ENCODE measurements at regions of chr14 and their contacts with region 1.

Region 1: DNA sequence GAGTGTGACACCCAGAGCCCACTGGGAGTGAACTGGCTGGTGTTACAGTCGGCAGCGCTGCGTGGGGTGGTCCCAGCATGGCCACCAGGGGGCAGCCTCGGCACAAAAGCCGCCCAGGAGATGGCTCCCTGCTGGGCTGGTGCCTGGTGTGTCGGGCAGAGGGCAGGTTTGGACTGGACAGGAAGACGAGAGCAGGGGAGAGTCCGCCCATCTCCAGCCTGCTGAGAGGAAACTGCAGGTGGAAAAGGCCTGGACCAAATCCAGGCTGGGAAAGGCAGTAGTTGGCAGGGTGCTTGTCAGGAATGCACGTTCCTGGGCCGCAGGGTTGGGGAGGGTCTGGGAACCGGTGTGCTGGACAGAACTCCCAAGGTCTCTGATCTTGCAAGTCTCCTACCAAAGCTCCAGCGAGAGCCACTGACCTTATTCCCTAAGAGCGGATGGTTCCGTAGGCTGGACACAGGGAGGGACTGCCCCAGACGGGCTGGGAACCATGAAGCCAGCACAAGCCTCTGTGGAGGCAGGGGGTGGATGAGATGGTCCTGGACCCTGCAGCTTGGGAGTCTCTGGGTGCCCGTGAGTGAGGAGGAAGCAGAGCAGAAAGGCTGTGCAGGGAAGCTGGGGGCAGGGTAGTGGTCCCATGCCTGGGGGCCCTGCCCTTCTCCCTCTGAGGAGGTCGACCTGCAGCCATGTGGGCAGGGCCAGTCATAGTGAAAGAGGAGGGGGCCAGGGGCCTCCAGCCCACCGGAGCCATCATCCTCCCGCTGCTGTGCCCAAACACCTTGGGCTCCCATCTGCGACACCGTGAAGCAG is 1.8 kb downstream of the AHNAK2 start:
- DNase-seq: peak; percentile 93
- H3K4me3 Mint-ChIP-seq: peak overlapping the region; percentile 97
- H3K27ac Mint-ChIP-seq: no peak overlapping the region
- H3K4me1 Mint-ChIP-seq: peaks cover 41% of the 10 kb centered on the region
- H3K27me3 Mint-ChIP-seq: no peaks in the 10 kb centered on the region
- CTCF ChIP-seq: peak; percentile 98

Region 2: DNA sequence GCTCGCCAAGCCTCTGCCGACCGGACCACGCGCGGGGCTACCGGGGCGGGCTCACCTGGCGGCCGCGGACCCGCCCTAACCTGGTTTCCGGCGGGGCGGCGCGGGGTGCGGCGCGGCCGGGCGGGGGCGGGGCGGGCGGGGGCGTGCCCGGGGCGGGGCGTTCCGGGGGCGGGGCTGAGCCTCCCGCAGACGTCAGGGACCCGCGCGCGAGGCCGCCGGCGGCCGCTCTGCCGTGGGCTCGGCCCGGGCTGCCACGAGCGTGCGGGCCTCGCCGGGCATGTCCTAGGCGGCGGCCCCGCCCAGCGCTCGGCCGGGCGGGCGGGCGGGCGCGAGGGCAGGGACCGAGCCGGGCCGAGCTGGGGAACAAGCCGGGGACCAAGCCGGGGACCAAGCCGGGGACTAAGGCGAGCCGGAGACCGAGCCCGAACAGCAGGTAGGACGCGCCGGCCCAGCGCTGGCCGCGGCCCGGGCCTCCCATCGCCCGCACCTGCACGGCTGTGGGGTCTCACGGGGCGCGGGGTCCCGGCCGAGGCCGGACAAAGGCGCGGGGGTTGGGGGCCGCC is 111.2 kb before region 1 on chr14 and contains the start of gene CEP170B:
- CTCF ChIA-PET with region 1: no interaction called
- POLR2A ChIA-PET with region 1: interaction called, 18 read pairs
- intact Hi-C with region 1: no loop called
- DNase-seq: peak; percentile 35
- H3K4me3 Mint-ChIP-seq: peak within 1 kb of the TSS; percentile 89
- H3K27ac Mint-ChIP-seq: peak within 1 kb of the TSS; percentile 90
- H3K4me1 Mint-ChIP-seq: peaks cover 15% of the 10 kb centered on the region
- H3K27me3 Mint-ChIP-seq: no peaks in the 10 kb centered on the region
- CTCF ChIP-seq: no peak
- total RNA-seq, gene CEP170B: 61.8 and 77.4 TPM in 2 replicates

Region 3: GRCh38 chr14:104932676-104933631 is 43.4 kb before region 1 on chr14:
- CTCF ChIA-PET with region 1: no interaction called
- POLR2A ChIA-PET with region 1: interaction called, 70 read pairs
- intact Hi-C with region 1: no loop called
- DNase-seq: peak; percentile 68
- H3K4me3 Mint-ChIP-seq: peak overlapping the region; percentile 65
- H3K27ac Mint-ChIP-seq: no peak overlapping the region
- H3K4me1 Mint-ChIP-seq: peaks cover 10% of the 10 kb centered on the region
- H3K27me3 Mint-ChIP-seq: no peaks in the 10 kb centered on the region
- CTCF ChIP-seq: peak; percentile 83

Region 4: GRCh38 chr14:105020815-105021655 is 44.6 kb after region 1 on chr14 and contains the start of gene CDCA4:
- CTCF ChIA-PET with region 1: interaction called, 96 read pairs
- POLR2A ChIA-PET with region 1: interaction called, 636 read pairs
- intact Hi-C with region 1: loop called (anchors 1 kb)
- DNase-seq: peak; percentile 96
- H3K4me3 Mint-ChIP-seq: peak within 1 kb of the TSS; percentile 94
- H3K27ac Mint-ChIP-seq: peak within 1 kb of the TSS; percentile 94
- H3K4me1 Mint-ChIP-seq: peaks cover 43% of the 10 kb centered on the region
- H3K27me3 Mint-ChIP-seq: no peaks in the 10 kb centered on the region
- CTCF ChIP-seq: no peak
- total RNA-seq, gene CDCA4: 29.3 and 33.0 TPM in 2 replicates

Region 5: DNA sequence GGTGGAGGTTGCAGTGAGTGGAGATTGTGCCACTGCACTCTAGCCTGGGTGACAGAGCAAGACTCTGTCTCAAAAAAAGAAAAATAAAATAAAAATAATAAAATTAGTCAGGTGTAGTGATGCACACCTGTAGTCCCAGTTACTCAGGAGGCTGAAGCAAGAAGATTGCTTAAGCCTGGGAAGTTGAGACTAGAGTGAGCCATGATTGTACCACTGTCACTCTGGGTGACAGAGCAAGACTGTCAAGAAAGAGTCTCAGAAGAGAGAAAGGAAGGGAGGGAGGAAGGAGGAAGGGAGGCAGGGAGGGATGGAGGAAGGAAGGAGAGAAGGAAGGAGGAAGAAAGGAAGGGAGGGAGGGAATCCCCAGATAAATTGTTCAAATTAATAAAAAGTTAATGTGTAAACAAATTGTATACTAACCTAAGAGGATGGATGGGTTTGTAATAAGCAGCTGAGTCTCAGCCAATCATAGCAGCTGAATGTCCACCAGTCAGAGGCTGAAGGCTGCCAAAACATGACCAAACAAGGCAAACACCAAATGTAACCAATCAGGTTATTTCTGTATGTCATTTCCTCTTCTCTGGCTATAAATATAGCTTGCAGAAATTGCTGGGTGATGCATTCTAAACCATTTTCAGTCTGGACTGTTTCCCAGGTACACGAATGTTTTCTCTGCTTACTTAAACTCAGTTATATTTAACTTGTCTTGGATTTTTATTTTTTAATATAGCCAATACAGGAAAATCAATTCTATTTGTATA is 50.6 kb after region 1 on chr14:
- CTCF ChIA-PET with region 1: interaction called, 96 read pairs
- POLR2A ChIA-PET with region 1: interaction called, 636 read pairs
- intact Hi-C with region 1: loop called (anchors 1 kb)
- DNase-seq: peak; percentile 33
- H3K4me3 Mint-ChIP-seq: no peak overlapping the region
- H3K27ac Mint-ChIP-seq: peak overlapping the region; percentile 64
- H3K4me1 Mint-ChIP-seq: peaks cover 18% of the 10 kb centered on the region
- H3K27me3 Mint-ChIP-seq: no peaks in the 10 kb centered on the region
- CTCF ChIP-seq: no peak

Region 6: GRCh38 chr14:105034314-105035039 is 58.1 kb after region 1 on chr14:
- CTCF ChIA-PET with region 1: interaction called, 24 read pairs
- POLR2A ChIA-PET with region 1: interaction called, 636 read pairs
- intact Hi-C with region 1: no loop called
- DNase-seq: no peak
- H3K4me3 Mint-ChIP-seq: no peak overlapping the region
- H3K27ac Mint-ChIP-seq: no peak overlapping the region
- H3K4me1 Mint-ChIP-seq: peaks cover 4% of the 10 kb centered on the region
- H3K27me3 Mint-ChIP-seq: no peaks in the 10 kb centered on the region
- CTCF ChIP-seq: no peak

Region 7: GRCh38 chr14:105281371-105282097 is 305.1 kb after region 1 on chr14:
- CTCF ChIA-PET with region 1: no interaction called
- POLR2A ChIA-PET with region 1: no interaction called
- intact Hi-C with region 1: loop called (anchors 2 kb)
- DNase-seq: peak; percentile 73
- H3K4me3 Mint-ChIP-seq: no peak overlapping the region
- H3K27ac Mint-ChIP-seq: no peak overlapping the region
- H3K4me1 Mint-ChIP-seq: peaks cover 6% of the 10 kb centered on the region
- H3K27me3 Mint-ChIP-seq: no peaks in the 10 kb centered on the region
- CTCF ChIP-seq: peak; percentile 62

Region 8: DNA sequence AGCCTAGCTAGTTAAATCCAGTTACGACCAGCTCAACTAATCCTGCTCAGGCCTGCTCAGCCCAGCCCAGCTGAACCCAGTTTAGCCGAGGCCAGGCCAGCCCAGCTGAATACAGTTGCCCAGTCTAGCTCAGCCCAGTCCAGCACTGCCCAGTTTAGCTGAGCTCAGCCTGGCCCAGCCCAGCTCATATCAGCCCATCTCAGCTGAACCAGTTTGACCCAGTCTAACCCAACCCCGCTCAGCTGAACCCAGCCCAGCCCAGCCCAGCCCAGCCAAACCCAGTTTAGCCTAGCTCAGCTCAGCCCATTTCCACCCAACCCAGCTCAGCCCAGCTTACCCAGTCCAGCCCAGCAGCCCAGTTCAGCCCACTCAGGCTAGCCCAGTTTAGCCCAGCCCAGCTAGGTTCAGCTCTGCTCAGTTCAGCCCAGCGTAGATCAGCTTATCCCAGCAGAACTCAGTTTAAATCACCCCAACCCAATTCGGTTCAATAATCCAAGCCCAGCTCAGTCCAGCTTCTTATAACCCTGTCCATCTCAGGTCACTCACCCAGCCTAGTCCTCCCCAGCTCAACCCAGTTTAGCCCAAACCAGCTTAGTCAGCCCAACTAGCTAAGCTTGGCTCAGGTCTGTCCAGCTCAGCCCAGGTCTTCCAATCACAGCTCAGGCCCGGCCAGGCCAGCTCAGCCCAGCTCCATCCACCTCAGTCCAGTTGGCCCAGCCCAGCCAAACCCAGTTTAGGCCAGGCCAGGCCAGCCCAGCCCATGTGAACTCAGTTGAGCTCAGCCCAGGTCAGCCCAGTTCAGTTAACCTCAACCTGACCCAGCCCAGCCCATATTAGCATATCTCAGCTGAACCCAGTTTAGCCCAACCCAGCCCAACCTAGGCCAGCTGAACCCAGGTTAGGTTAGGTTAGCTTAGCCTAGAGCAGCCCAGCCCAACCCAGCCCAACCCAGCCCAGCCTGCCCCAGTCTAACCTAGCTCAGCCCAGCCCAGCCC is 626.7 kb after region 1 on chr14:
- CTCF ChIA-PET with region 1: no interaction called
- POLR2A ChIA-PET with region 1: no interaction called
- intact Hi-C with region 1: no loop called
- DNase-seq: no peak
- H3K4me3 Mint-ChIP-seq: no peak overlapping the region
- H3K27ac Mint-ChIP-seq: no peak overlapping the region
- H3K4me1 Mint-ChIP-seq: no peaks in the 10 kb centered on the region
- H3K27me3 Mint-ChIP-seq: no peaks in the 10 kb centered on the region
- CTCF ChIP-seq: no peak